ENCODE measurements at regions of chr5 and their contacts with region 1.

Region 1: DNA sequence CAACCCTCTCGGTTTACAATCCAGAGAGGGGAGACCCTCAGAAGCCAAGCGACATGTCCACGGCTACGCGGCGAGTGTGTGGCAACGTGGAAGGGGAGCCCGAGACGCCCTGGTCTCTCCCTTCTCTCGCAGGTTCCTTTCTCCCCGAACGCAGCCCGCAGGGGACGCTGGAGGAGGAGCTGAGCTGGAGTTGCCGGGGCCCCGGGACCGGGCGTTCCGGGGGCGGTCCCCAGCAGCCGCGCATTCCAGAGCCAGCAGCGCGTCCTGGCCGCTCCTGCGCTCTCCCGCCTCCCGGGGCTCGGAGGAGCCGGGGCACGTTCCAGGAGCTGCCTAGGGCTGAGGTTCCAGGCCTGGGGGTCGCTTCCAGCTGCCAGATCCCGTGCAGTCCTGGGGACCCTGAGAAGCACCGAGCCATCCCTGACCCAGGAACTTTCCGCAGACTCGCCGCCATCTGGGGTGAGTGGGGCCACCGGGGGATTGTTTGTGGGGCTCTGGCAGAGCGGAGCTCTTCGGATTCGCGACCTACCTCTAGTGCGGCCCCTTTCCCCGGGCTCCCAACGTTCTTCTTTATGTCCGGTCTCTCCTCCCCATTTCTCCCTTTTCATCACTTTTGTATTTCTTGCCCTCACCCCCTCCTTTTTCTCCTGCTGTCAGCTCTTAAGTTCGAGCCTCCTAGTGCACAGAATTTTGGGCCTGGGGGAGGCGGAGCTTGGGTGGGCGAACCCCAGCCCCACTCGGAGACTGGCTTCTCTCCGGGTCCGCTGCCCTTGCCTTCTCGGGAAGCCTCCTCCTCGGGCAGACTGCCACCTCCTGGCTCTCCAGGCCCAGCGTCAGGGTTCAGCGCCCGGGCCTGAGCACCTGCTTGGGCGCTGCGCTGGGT is at the start of gene SMIM3:
- DNase-seq: peak; percentile 55 to 58
- ATAC-seq: peak; percentile 91 to 94
- H3K4me3 ChIP-seq: peak within 1 kb of the TSS; percentile 81
- H3K27ac ChIP-seq: peak within 1 kb of the TSS; percentile 78 to 86
- H3K4me1 ChIP-seq: peaks cover 9% of the 10 kb centered on the region
- CTCF ChIP-seq: peak; percentile 54
- EP300 ChIP-seq: no peak
- POLR2A ChIP-seq: peak; percentile 33; the same call in 1 of the 2 replicates
- RAD21 ChIP-seq: peak; percentile 64 to 66
- polyA plus RNA-seq, gene SMIM3: 4.5 and 4.9 TPM in 2 replicates

Region 2: DNA sequence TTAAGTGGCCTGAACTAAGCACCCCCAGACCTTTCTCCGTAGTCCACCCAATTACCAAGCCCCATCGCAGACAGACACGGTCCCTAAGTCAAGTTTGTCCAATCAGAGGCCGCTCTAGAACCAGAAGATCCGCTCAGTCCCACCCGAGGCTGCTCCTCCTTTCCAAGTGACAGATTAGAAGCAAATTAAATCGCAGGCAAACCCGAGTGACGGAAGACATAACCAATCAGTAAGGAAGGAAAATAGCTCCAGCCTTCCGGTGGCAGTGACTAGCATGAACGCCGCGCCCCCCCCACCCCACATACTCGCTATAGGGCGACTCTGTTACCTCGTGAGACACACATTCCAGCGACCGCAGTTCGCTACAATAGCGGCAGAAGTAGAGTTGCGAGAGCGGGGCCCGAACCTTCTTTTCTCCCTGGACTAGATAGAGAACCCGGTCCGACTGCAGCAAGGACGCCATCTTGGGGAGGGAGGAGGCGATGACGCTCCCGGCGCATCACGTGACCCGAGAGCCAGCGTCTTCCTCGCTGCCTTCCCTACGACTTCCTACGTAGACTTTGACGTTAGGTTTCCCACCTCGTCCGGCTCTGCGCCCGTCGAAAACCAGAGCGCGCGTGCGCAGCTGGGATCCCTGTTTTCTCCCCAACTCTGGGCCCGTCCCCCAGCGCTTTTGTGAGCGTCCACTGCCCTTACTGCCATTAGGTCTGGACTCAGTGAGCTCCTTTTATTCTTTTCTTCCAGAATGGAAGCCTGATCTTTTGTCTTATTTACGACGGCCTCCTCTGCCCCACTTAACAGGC is 20.0 kb before region 1 on chr5 and contains the start of gene DCTN4:
- CTCF ChIA-PET with region 1: interaction called, 15 read pairs
- POLR2A ChIA-PET with region 1: interaction called, 12 read pairs
- DNase-seq: peak; percentile 98 to 99
- ATAC-seq: peak; percentile 95 to 98
- H3K4me3 ChIP-seq: peak within 1 kb of the TSS; percentile 58
- H3K27ac ChIP-seq: peak within 1 kb of the TSS; percentile 91 to 93
- H3K4me1 ChIP-seq: peaks cover 11% of the 10 kb centered on the region
- CTCF ChIP-seq: no peak
- EP300 ChIP-seq: no peak
- POLR2A ChIP-seq: peak; percentile 66
- RAD21 ChIP-seq: no peak
- polyA plus RNA-seq, gene DCTN4: 34.8 and 38.4 TPM in 2 replicates

Region 3: GRCh38 chr5:150789943-150790611 is 11.3 kb after region 1 on chr5:
- CTCF ChIA-PET with region 1: interaction called, 13 read pairs
- POLR2A ChIA-PET with region 1: no interaction called
- DNase-seq: peak in 1 of 2 experiments; percentile 16
- ATAC-seq: peak; percentile 71 to 75; a peak in 5 of 6 replicates
- H3K4me3 ChIP-seq: no peak overlapping the region
- H3K27ac ChIP-seq: peak overlapping the region in 1 of 2 experiments; percentile 53; a peak in 3 of 6 replicates
- H3K4me1 ChIP-seq: peaks cover 7% of the 10 kb centered on the region; the same call in 1 of the 3 replicates
- CTCF ChIP-seq: no peak
- EP300 ChIP-seq: no peak
- POLR2A ChIP-seq: no peak
- RAD21 ChIP-seq: no peak

Region 4: GRCh38 chr5:150801117-150801927 is 22.6 kb after region 1 on chr5:
- CTCF ChIA-PET with region 1: interaction called, 16 read pairs
- POLR2A ChIA-PET with region 1: no interaction called
- DNase-seq: peak; percentile 59 to 71
- ATAC-seq: peak; percentile 89 to 97
- H3K4me3 ChIP-seq: peak overlapping the region; percentile 29
- H3K27ac ChIP-seq: peak overlapping the region; percentile 12 to 50; a peak in 2 of 6 replicates
- H3K4me1 ChIP-seq: no peaks in the 10 kb centered on the region
- CTCF ChIP-seq: peak; percentile 67
- EP300 ChIP-seq: no peak
- POLR2A ChIP-seq: no peak
- RAD21 ChIP-seq: peak; percentile 58 to 63; a peak in 4 of 5 replicates

Measured in A549 (cell line).